ENCODE measurements at regions of chr17 and their contacts with region 1.

Region 1: GRCh38 chr17:45060797-45061605 is at the start of gene NMT1:
- DNase-seq: peak; percentile 99 to 100
- ATAC-seq: peak; percentile 95 to 97
- H3K4me3 ChIP-seq: peak within 1 kb of the TSS; percentile 75 to 99 (median 87)
- H3K27ac ChIP-seq: peak within 1 kb of the TSS; percentile 91 to 98 (median 97)
- H3K4me1 ChIP-seq: peaks cover 36 to 49% of the 10 kb centered on the region in 2 donors
- H3K27me3 ChIP-seq: no peaks in the 10 kb centered on the region
- CTCF ChIP-seq: peak in 1 of 5 experiments; percentile 19
- POLR2A ChIP-seq: peak; percentile 91 to 98
- total RNA-seq, gene NMT1: 60.7 to 127 (median 71.5) TPM

Region 2: GRCh38 chr17:45132572-45133463 is 71.8 kb after region 1 on chr17:
- in situ Hi-C with region 1: no loop called
- intact Hi-C with region 1: no loop called
- DNase-seq: peak; percentile 82 to 89
- ATAC-seq: peak; percentile 42 to 44
- H3K4me3 ChIP-seq: peak overlapping the region; percentile 72 to 98 (median 94)
- H3K27ac ChIP-seq: peak overlapping the region; percentile 93 to 100 (median 97)
- H3K4me1 ChIP-seq: peaks cover 50 to 56% of the 10 kb centered on the region in 2 donors
- H3K27me3 ChIP-seq: no peaks in the 10 kb centered on the region
- CTCF ChIP-seq: peak; percentile 81 to 91 (median 89)
- POLR2A ChIP-seq: peak; percentile 59 to 72

Region 3: DNA sequence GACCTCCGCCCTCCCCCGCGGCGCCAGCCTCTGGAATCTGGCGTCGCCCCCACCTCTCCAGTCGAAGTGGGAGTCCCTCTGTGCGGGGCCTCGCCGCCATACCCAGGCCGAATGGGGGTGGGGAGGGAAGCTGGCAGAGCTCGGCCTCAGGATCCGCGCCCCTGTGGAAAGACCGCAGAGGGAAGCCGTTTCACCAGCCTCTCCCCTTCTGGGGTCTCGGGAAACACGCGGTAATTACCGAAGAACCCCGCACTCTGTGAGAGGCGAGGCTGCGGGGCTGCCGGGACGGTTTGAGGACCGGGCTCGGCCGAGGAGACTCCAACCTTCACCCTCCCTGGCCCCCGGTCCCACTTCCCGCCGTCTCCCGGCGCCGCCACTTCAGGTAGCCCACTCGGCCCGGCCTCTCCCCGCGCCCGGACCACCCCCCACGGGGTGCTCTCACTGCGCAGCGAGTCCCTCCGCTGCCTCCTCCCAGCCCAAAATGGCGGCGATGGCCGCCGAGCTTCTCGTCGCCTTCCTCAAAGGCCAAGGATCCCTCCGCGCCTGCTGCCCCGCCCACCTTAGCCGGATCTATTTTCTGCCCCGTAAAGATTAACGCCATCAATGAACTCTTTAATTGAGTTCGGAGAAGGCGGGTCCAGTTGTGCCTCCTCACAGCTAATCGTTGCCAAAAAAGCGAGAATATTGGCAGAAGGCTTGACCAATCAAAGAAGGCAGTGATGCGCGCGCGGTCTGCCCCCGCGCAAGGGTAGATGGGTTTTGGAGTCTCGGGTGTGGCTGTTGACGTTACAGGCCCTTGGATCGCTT is 100.2 kb after region 1 on chr17:
- in situ Hi-C with region 1: loop called in 1 of 4 experiments (anchors 25 kb)
- intact Hi-C with region 1: no loop called
- DNase-seq: peak; percentile 98 to 99
- ATAC-seq: peak; percentile 94 to 98
- H3K4me3 ChIP-seq: peak overlapping the region; percentile 85 to 99 (median 92)
- H3K27ac ChIP-seq: peak overlapping the region; percentile 96 to 100 (median 100)
- H3K4me1 ChIP-seq: peaks cover 38 to 45% of the 10 kb centered on the region in 2 donors
- H3K27me3 ChIP-seq: no peaks in the 10 kb centered on the region
- CTCF ChIP-seq: peak in 2 of 5 experiments; percentile 25 to 40
- POLR2A ChIP-seq: peak; percentile 94 to 95